ENCODE measurements at regions of chr5 and their contacts with region 1.

Region 1: GRCh38 chr5:14364576-14365472 is 216.8 kb upstream of the OTULINL start:
- DNase-seq: no peak
- ATAC-seq: no peak
- H3K4me3 ChIP-seq: no peak overlapping the region
- H3K4me3 Mint-ChIP-seq: no peak overlapping the region
- H3K27ac ChIP-seq: no peak overlapping the region
- H3K27ac Mint-ChIP-seq: no peak overlapping the region
- H3K4me1 ChIP-seq: peaks cover 10 to 13% of the 10 kb centered on the region in 2 donors
- H3K4me1 Mint-ChIP-seq: peaks cover 12% of the 10 kb centered on the region
- H3K27me3 ChIP-seq: no peaks in the 10 kb centered on the region
- H3K27me3 Mint-ChIP-seq: no peaks in the 10 kb centered on the region
- CTCF ChIP-seq: peak; percentile 71

Region 2: DNA sequence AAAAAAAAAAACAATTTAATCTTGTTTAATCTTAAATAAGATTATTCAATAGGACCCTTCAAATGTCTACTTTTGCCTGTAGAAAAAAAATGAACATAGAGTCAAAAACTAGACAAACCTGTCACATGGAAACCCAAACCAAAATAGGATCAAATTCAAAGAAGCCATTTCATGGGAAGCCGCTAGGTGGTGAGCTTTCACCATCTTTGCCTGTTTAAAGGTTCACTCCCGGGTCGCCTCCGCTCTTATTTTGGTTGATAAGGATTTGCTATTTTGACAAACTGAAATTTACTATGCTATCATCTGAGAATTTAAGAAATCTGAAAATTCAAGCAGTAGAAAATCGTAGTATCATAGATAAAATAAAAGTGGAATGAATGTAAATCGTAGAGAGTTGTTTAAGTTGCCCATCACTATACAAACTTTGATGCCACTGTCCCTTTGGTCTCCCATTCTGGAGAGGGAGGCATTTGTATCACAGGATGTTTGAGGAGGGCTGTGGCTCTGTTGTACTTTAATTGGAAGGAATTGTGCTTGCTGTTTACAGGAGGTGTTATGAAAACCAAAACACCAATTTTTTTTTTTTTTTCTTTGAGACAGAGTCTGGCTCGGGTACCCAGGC is 376.9 kb before region 1 on chr5:
- CTCF ChIA-PET with region 1: interaction called, 7 read pairs
- POLR2A ChIA-PET with region 1: no interaction called
- intact Hi-C with region 1: loop called (anchors 1 kb)
- DNase-seq: peak; percentile 65
- ATAC-seq: no peak
- H3K4me3 ChIP-seq: no peak overlapping the region
- H3K4me3 Mint-ChIP-seq: no peak overlapping the region
- H3K27ac ChIP-seq: no peak overlapping the region
- H3K27ac Mint-ChIP-seq: no peak overlapping the region
- H3K4me1 ChIP-seq: no peaks in the 10 kb centered on the region
- H3K4me1 Mint-ChIP-seq: peaks cover 2% of the 10 kb centered on the region
- H3K27me3 ChIP-seq: no peaks in the 10 kb centered on the region
- H3K27me3 Mint-ChIP-seq: peaks cover 17% of the 10 kb centered on the region
- CTCF ChIP-seq: peak; percentile 83

Region 3: GRCh38 chr5:14090290-14090689 is 274.5 kb before region 1 on chr5:
- CTCF ChIA-PET with region 1: no interaction called
- POLR2A ChIA-PET with region 1: no interaction called
- intact Hi-C with region 1: no loop called
- DNase-seq: no peak
- ATAC-seq: no peak
- H3K4me3 ChIP-seq: no peak overlapping the region
- H3K4me3 Mint-ChIP-seq: no peak overlapping the region
- H3K27ac ChIP-seq: no peak overlapping the region
- H3K27ac Mint-ChIP-seq: no peak overlapping the region
- H3K4me1 ChIP-seq: no peaks in the 10 kb centered on the region
- H3K4me1 Mint-ChIP-seq: no peaks in the 10 kb centered on the region
- H3K27me3 ChIP-seq: peaks cover 0 to 3% (median 1%) of the 10 kb centered on the region in 4 experiments
- H3K27me3 Mint-ChIP-seq: peaks cover 20% of the 10 kb centered on the region
- CTCF ChIP-seq: no peak

Region 4: GRCh38 chr5:14326035-14326903 is 38.6 kb before region 1 on chr5:
- CTCF ChIA-PET with region 1: interaction called, 14 read pairs
- POLR2A ChIA-PET with region 1: no interaction called
- intact Hi-C with region 1: loop called (anchors 2 kb)
- DNase-seq: peak; percentile 43
- ATAC-seq: peak; percentile 62
- H3K4me3 ChIP-seq: no peak overlapping the region
- H3K4me3 Mint-ChIP-seq: no peak overlapping the region
- H3K27ac ChIP-seq: no peak overlapping the region
- H3K27ac Mint-ChIP-seq: peak overlapping the region; percentile 11
- H3K4me1 ChIP-seq: peaks cover 29 to 32% of the 10 kb centered on the region in 2 donors
- H3K4me1 Mint-ChIP-seq: peaks cover 37% of the 10 kb centered on the region
- H3K27me3 ChIP-seq: no peaks in the 10 kb centered on the region
- H3K27me3 Mint-ChIP-seq: no peaks in the 10 kb centered on the region
- CTCF ChIP-seq: peak; percentile 36

Region 5: GRCh38 chr5:14342306-14342705 is 22.5 kb before region 1 on chr5:
- CTCF ChIA-PET with region 1: interaction called, 11 read pairs
- POLR2A ChIA-PET with region 1: no interaction called
- intact Hi-C with region 1: no loop called
- DNase-seq: peak; percentile 62
- ATAC-seq: peak; percentile 95
- H3K4me3 ChIP-seq: peak overlapping the region in 3 of 5 experiments; percentile 2 to 31 (median 3)
- H3K4me3 Mint-ChIP-seq: peak overlapping the region; percentile 70
- H3K27ac ChIP-seq: peak overlapping the region; percentile 45 to 59
- H3K27ac Mint-ChIP-seq: peak overlapping the region; percentile 82
- H3K4me1 ChIP-seq: peaks cover 33 to 38% of the 10 kb centered on the region in 2 donors
- H3K4me1 Mint-ChIP-seq: peaks cover 46% of the 10 kb centered on the region
- H3K27me3 ChIP-seq: no peaks in the 10 kb centered on the region
- H3K27me3 Mint-ChIP-seq: no peaks in the 10 kb centered on the region
- CTCF ChIP-seq: no peak

Region 6: DNA sequence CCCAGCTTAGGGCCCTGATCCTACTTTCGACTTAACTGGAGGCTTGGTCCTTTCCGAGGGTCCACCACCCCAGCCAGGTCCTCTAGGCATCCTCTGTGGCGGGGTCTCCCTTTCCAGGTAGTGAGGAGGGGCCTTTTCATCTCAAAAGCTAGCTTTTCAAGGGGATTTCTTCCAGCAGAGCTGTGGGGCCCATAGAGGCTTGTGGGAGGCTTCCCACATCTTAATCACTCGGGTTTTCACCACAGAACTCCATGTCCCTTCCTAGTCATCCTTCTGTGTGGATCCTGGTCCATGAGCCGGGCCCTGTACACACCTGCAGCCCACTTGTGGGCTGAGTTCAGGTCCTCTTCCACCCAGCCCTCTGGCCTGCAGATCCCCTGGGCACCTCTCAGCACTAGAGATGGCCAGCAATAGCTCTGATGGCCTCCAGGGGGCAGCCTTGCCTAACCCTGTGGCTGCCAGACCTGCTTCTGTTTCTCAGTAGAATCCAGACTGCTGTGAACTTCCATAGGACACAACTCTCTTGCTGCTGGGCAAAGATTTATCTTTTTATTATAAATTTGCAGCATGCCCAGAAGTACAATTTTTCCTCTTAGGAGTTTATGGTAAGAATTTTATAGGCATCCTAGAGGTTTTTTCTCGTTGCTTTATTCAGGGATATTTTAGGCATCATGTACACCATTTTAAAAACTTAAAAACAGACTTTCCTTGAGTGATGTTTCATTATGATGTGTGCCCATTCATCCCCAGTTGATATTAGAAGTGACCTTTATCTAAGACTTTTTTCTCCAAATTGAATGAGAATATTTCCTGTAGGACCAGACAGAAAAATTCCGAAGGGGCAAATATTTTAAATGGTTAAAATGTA is 12.7 kb before region 1 on chr5:
- CTCF ChIA-PET with region 1: interaction called, 21 read pairs
- POLR2A ChIA-PET with region 1: no interaction called
- intact Hi-C with region 1: no loop called
- DNase-seq: peak; percentile 72
- ATAC-seq: peak; percentile 93
- H3K4me3 ChIP-seq: no peak overlapping the region
- H3K4me3 Mint-ChIP-seq: no peak overlapping the region
- H3K27ac ChIP-seq: no peak overlapping the region
- H3K27ac Mint-ChIP-seq: peak overlapping the region; percentile 68
- H3K4me1 ChIP-seq: peaks cover 9 to 21% of the 10 kb centered on the region in 2 donors
- H3K4me1 Mint-ChIP-seq: peaks cover 32% of the 10 kb centered on the region
- H3K27me3 ChIP-seq: no peaks in the 10 kb centered on the region
- H3K27me3 Mint-ChIP-seq: no peaks in the 10 kb centered on the region
- CTCF ChIP-seq: peak; percentile 96

Region 7: DNA sequence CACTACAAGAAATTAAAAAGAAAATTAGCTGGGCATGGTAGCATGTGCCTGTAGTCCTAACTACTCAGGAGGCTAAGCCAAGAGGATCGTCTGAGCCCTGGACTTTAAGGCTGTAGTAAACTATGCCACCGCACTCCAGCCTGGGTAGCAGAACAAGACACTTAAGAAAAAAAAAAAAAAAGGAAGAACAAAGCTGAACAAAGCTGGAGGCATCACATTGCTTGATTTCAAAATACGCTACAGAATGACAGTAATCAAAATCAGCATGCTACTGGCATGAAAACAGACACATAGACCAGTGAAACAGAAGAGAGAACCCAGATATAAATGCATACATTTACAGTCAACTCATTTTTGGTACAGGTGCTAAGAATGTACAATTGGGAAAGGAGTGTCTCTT is 285.2 kb after region 1 on chr5:
- CTCF ChIA-PET with region 1: interaction called, 12 read pairs
- POLR2A ChIA-PET with region 1: no interaction called
- intact Hi-C with region 1: no loop called
- DNase-seq: no peak
- ATAC-seq: no peak
- H3K4me3 ChIP-seq: no peak overlapping the region
- H3K4me3 Mint-ChIP-seq: no peak overlapping the region
- H3K27ac ChIP-seq: no peak overlapping the region
- H3K27ac Mint-ChIP-seq: no peak overlapping the region
- H3K4me1 ChIP-seq: peaks cover under 1 to 1% of the 10 kb centered on the region in 2 donors
- H3K4me1 Mint-ChIP-seq: peaks cover under 1% of the 10 kb centered on the region
- H3K27me3 ChIP-seq: no peaks in the 10 kb centered on the region
- H3K27me3 Mint-ChIP-seq: peaks cover 20% of the 10 kb centered on the region
- CTCF ChIP-seq: no peak

Measured in B cell (primary cell).